CD4-positive, alpha-beta T cell (primary cell): ENCODE measurements at regions of chr1 and their contacts with region 1.

Region 1: DNA sequence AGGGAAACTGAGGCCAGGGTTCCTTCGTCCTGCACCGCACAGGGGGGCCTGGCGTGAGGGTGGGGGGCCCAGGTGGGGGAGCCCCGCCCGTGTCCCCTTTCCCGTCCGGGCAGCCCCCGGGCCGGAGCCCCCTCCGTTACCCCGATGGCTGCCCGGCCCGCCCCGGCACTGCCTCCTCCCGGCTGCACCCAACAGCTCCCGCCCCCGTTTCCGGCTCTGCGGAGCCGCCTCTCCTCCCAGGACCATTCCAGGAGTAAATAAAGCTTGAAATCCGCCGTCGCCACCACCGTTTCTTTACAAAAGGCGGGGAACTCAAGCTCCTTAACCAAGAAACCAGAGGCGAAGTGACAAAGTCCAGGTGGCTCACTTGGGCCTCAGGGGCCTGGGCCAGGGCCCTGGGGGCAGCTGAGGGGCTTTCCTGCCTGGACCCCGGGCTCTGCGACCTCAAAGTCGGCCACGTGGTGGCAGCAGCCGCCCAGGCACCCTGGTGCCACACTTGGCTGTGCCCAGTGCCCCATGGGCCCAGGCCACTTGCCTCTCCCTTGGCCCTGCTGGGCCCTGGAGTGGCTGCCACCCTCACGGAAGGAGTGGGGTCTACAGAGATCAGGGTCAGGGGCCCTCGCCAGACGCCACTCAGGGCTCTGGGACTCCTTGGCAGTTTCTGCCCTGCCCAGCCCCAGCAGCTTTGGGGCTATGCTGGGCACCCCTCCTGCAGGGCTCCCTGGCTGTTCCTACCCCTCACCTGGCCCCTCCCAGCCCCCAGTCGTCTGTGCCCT is 514 bp upstream of the FAAP20 start:
- DNase-seq: peak; percentile 77 to 93 (median 86)
- ATAC-seq: peak; percentile 71
- H3K4me3 ChIP-seq: peak overlapping the region; percentile 57
- H3K4me3 Mint-ChIP-seq: peak overlapping the region; percentile 88
- H3K27ac ChIP-seq: peak overlapping the region; percentile 83 to 86
- H3K27ac Mint-ChIP-seq: peak overlapping the region; percentile 86
- H3K4me1 ChIP-seq: peaks cover 66% of the 10 kb centered on the region
- H3K4me1 Mint-ChIP-seq: peaks cover 13% of the 10 kb centered on the region
- H3K27me3 ChIP-seq: no peaks in the 10 kb centered on the region
- H3K27me3 Mint-ChIP-seq: no peaks in the 10 kb centered on the region
- CTCF ChIP-seq: peak; percentile 94

Region 2: GRCh38 chr1:1665800-1666251 is 529.3 kb before region 1 on chr1:
- CTCF ChIA-PET with region 1: no interaction called
- POLR2A ChIA-PET with region 1: no interaction called
- intact Hi-C with region 1: no loop called
- DNase-seq: peak in 9 of 14 experiments; percentile 11 to 56 (median 31)
- ATAC-seq: no peak
- H3K4me3 ChIP-seq: no peak overlapping the region
- H3K4me3 Mint-ChIP-seq: no peak overlapping the region
- H3K27ac ChIP-seq: no peak overlapping the region
- H3K27ac Mint-ChIP-seq: no peak overlapping the region
- H3K4me1 ChIP-seq: peaks cover 9% of the 10 kb centered on the region
- H3K4me1 Mint-ChIP-seq: no peaks in the 10 kb centered on the region
- H3K27me3 ChIP-seq: no peaks in the 10 kb centered on the region
- H3K27me3 Mint-ChIP-seq: no peaks in the 10 kb centered on the region
- CTCF ChIP-seq: peak; percentile 59

Region 3: GRCh38 chr1:2003278-2004131 is 191.6 kb before region 1 on chr1 and contains the start of gene CFAP74:
- CTCF ChIA-PET with region 1: no interaction called
- POLR2A ChIA-PET with region 1: no interaction called
- intact Hi-C with region 1: no loop called
- DNase-seq: no peak
- ATAC-seq: no peak
- H3K4me3 ChIP-seq: no peak within 1 kb of the TSS
- H3K4me3 Mint-ChIP-seq: no peak within 1 kb of the TSS
- H3K27ac ChIP-seq: no peak within 1 kb of the TSS
- H3K27ac Mint-ChIP-seq: no peak within 1 kb of the TSS
- H3K4me1 ChIP-seq: peaks cover 4% of the 10 kb centered on the region
- H3K4me1 Mint-ChIP-seq: no peaks in the 10 kb centered on the region
- H3K27me3 ChIP-seq: peaks cover 15 to 28% of the 10 kb centered on the region in 2 experiments
- H3K27me3 Mint-ChIP-seq: peaks cover 55% of the 10 kb centered on the region
- CTCF ChIP-seq: no peak
- total RNA-seq, gene CFAP74: not detected

Region 4: DNA sequence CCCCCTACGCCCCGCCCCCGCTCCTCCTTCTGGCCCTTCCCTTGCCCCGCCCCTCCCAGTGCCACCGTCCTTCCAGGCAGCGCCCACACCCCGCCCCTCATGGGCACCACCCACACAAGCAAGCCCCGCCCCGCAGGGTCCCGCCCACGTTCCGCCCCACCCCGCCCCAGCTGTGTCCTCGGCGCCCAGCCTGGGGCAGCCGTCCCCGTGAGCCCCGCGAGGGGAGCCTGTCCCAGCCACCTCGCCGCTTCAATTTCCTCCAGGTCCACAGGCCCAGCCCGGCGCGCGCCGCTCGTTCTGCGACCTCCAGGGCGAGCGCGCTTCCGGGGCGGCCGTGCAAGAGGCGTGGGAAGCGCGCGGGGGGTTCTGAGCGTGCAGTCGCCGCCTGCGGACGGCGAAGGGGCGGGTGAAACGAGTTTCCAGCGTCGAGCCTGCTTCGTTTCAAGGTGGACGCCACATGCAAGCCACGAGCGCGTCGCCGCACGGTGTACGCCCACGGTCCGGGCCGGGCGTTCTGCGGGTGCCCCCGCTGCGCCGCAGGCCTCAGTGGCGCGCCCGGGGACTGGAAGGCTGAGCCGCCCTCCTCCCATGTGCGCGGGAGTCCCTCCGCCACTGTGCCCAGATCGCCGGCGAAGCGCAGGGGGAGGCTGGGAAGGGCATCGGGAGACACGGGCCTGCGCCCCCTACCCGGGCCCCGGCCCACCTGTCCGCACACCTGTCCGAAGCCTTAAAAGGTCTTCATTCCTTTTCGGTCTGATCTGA is 10.3 kb after region 1 on chr1:
- CTCF ChIA-PET with region 1: interaction called, 11 read pairs
- POLR2A ChIA-PET with region 1: interaction called, 6 read pairs
- intact Hi-C with region 1: no loop called
- DNase-seq: peak; percentile 91 to 97 (median 96)
- ATAC-seq: peak; percentile 92
- H3K4me3 ChIP-seq: peak overlapping the region; percentile 42
- H3K4me3 Mint-ChIP-seq: peak overlapping the region; percentile 68
- H3K27ac ChIP-seq: peak overlapping the region in 1 of 2 donors; percentile 35
- H3K27ac Mint-ChIP-seq: no peak overlapping the region
- H3K4me1 ChIP-seq: peaks cover 28% of the 10 kb centered on the region
- H3K4me1 Mint-ChIP-seq: peaks cover 5% of the 10 kb centered on the region
- H3K27me3 ChIP-seq: no peaks in the 10 kb centered on the region
- H3K27me3 Mint-ChIP-seq: no peaks in the 10 kb centered on the region
- CTCF ChIP-seq: no peak

Region 5: GRCh38 chr1:2255420-2256369 is 60.6 kb after region 1 on chr1:
- CTCF ChIA-PET with region 1: interaction called, 6 read pairs
- POLR2A ChIA-PET with region 1: interaction called, 13 read pairs
- intact Hi-C with region 1: loop called (anchors 5 kb)
- DNase-seq: peak; percentile 40 to 97 (median 66)
- ATAC-seq: peak; percentile 67
- H3K4me3 ChIP-seq: no peak overlapping the region
- H3K4me3 Mint-ChIP-seq: no peak overlapping the region
- H3K27ac ChIP-seq: peak overlapping the region; percentile 99 to 100
- H3K27ac Mint-ChIP-seq: no peak overlapping the region
- H3K4me1 ChIP-seq: peaks cover 97% of the 10 kb centered on the region
- H3K4me1 Mint-ChIP-seq: peaks cover 52% of the 10 kb centered on the region
- H3K27me3 ChIP-seq: no peaks in the 10 kb centered on the region
- H3K27me3 Mint-ChIP-seq: no peaks in the 10 kb centered on the region
- CTCF ChIP-seq: no peak

Region 6: GRCh38 chr1:2381741-2382620 is 186.9 kb after region 1 on chr1:
- CTCF ChIA-PET with region 1: interaction called, 47 read pairs
- POLR2A ChIA-PET with region 1: interaction called, 27 read pairs
- intact Hi-C with region 1: loop called (anchors 1 kb)
- DNase-seq: peak; percentile 63 to 86 (median 74)
- ATAC-seq: peak; percentile 95
- H3K4me3 ChIP-seq: no peak overlapping the region
- H3K4me3 Mint-ChIP-seq: no peak overlapping the region
- H3K27ac ChIP-seq: no peak overlapping the region
- H3K27ac Mint-ChIP-seq: no peak overlapping the region
- H3K4me1 ChIP-seq: peaks cover 13% of the 10 kb centered on the region
- H3K4me1 Mint-ChIP-seq: no peaks in the 10 kb centered on the region
- H3K27me3 ChIP-seq: no peaks in the 10 kb centered on the region
- H3K27me3 Mint-ChIP-seq: no peaks in the 10 kb centered on the region
- CTCF ChIP-seq: peak; percentile 87

Region 7: GRCh38 chr1:2545759-2546514 is 350.9 kb after region 1 on chr1:
- CTCF ChIA-PET with region 1: interaction called, 3 read pairs
- POLR2A ChIA-PET with region 1: interaction called, 10 read pairs
- intact Hi-C with region 1: loop called in 1 of 2 experiments (anchors 1 kb)
- DNase-seq: peak; percentile 82 to 97 (median 88)
- ATAC-seq: peak; percentile 45
- H3K4me3 ChIP-seq: peak overlapping the region; percentile 81
- H3K4me3 Mint-ChIP-seq: peak overlapping the region; percentile 95
- H3K27ac ChIP-seq: peak overlapping the region; percentile 96 to 99
- H3K27ac Mint-ChIP-seq: peak overlapping the region; percentile 99
- H3K4me1 ChIP-seq: peaks cover 70% of the 10 kb centered on the region
- H3K4me1 Mint-ChIP-seq: peaks cover 38% of the 10 kb centered on the region
- H3K27me3 ChIP-seq: peaks cover 0 to 2% of the 10 kb centered on the region in 2 experiments
- H3K27me3 Mint-ChIP-seq: no peaks in the 10 kb centered on the region
- CTCF ChIP-seq: no peak